ENCODE measurements at regions of chr9 and their contacts with region 1.

Region 1: GRCh38 chr9:17810728-17811571 is 232.1 kb downstream of the SH3GL2 start:
- DNase-seq: peak in 1 of 2 experiments; percentile 36
- H3K4me3 ChIP-seq: no peak overlapping the region
- H3K4me3 Mint-ChIP-seq: no peak overlapping the region
- H3K27ac Mint-ChIP-seq: no peak overlapping the region
- H3K4me1 ChIP-seq: no peaks in the 10 kb centered on the region
- H3K4me1 Mint-ChIP-seq: no peaks in the 10 kb centered on the region
- H3K27me3 ChIP-seq: no peaks in the 10 kb centered on the region
- H3K27me3 Mint-ChIP-seq: peaks cover 13% of the 10 kb centered on the region
- CTCF ChIP-seq: peak; percentile 58 to 66

Region 2: DNA sequence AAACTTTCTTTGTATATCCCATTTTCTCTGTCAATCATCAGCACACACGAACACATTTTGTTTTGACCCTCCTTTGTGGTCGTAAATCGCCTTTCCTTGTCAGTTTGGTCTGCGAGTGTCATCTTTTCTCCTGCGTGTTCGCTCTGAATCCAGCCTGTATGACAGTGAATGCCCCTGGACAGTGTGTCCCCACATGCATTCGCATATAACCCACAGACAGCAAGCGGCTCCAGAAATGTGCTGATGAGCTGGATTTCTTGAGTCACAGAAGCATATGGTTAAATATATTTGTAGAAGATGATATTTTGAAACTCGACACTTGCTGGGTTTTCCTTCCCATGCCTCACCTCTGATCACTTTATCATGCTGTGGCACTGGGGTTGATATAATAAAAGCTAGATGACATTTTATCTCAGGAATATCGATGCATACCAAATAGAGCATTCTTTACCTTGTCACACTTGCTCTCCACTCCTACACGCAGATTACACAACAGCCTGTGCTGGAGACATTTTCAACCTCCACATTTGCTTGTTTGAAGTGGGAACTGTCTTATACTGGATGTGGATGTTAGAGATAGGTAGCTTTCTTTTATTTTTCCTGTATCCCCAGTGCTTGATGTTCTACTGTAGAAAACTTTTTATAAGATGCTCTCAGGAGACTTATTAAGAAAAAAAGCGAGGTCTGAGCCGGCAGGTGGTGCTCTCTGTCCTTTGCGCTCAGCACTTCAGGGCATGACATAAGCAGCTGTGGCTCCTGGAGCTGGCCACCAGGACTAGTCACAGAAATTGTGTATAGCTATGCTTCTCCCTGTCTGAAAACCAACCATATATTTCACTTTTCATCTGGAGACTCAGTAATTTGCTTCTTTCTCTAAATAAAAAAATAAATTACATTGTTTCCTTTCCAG is 17.0 kb before region 1 on chr9:
- CTCF ChIA-PET with region 1: interaction called, 10 read pairs
- POLR2A ChIA-PET with region 1: no interaction called
- intact Hi-C with region 1: no loop called
- DNase-seq: peak; percentile 36 to 42
- H3K4me3 ChIP-seq: no peak overlapping the region
- H3K4me3 Mint-ChIP-seq: no peak overlapping the region
- H3K27ac Mint-ChIP-seq: no peak overlapping the region
- H3K4me1 ChIP-seq: no peaks in the 10 kb centered on the region
- H3K4me1 Mint-ChIP-seq: no peaks in the 10 kb centered on the region
- H3K27me3 ChIP-seq: no peaks in the 10 kb centered on the region
- H3K27me3 Mint-ChIP-seq: peaks cover 4% of the 10 kb centered on the region
- CTCF ChIP-seq: peak; percentile 28 to 67

Region 3: DNA sequence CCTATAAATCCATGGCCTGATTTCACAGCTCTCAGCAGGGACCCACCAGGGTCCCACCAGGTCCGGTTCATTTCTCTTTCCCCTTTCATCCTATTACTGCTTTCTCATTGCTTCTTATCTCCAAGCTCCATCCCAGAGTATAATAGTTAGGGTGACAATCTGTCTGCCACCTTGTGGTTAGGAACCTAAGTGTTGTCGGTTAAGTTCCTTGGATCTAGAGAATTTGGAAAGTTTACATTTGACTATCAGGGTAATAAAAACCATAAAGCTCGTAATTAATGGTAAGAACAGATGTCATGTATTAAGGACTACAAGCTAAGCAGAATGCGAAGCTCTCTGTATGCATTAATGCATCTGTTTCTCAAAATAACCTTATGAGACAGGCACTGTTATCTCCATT is 27.0 kb after region 1 on chr9:
- CTCF ChIA-PET with region 1: interaction called, 24 read pairs
- POLR2A ChIA-PET with region 1: no interaction called
- intact Hi-C with region 1: loop called (anchors 1 kb)
- DNase-seq: no peak
- H3K4me3 ChIP-seq: no peak overlapping the region
- H3K4me3 Mint-ChIP-seq: no peak overlapping the region
- H3K27ac Mint-ChIP-seq: no peak overlapping the region
- H3K4me1 ChIP-seq: no peaks in the 10 kb centered on the region
- H3K4me1 Mint-ChIP-seq: no peaks in the 10 kb centered on the region
- H3K27me3 ChIP-seq: no peaks in the 10 kb centered on the region
- H3K27me3 Mint-ChIP-seq: peaks cover 2% of the 10 kb centered on the region
- CTCF ChIP-seq: peak in 1 of 2 experiments; percentile 28

Region 4: GRCh38 chr9:18143028-18143745 is 332.2 kb after region 1 on chr9:
- CTCF ChIA-PET with region 1: interaction called, 11 read pairs
- POLR2A ChIA-PET with region 1: no interaction called
- intact Hi-C with region 1: loop called (anchors 5 kb)
- DNase-seq: peak in 1 of 2 experiments; percentile 11
- H3K4me3 ChIP-seq: no peak overlapping the region
- H3K4me3 Mint-ChIP-seq: no peak overlapping the region
- H3K27ac Mint-ChIP-seq: no peak overlapping the region
- H3K4me1 ChIP-seq: no peaks in the 10 kb centered on the region
- H3K4me1 Mint-ChIP-seq: no peaks in the 10 kb centered on the region
- H3K27me3 ChIP-seq: no peaks in the 10 kb centered on the region
- H3K27me3 Mint-ChIP-seq: no peaks in the 10 kb centered on the region
- CTCF ChIP-seq: peak in 1 of 2 experiments; percentile 16